ENCODE measurements at regions of chr4 and their contacts with region 1.

Region 1: GRCh38 chr4:152415980-152416379 is 119.9 kb downstream of the FBXW7 start:
- DNase-seq: no peak
- CTCF ChIP-seq: no peak

Region 2: DNA sequence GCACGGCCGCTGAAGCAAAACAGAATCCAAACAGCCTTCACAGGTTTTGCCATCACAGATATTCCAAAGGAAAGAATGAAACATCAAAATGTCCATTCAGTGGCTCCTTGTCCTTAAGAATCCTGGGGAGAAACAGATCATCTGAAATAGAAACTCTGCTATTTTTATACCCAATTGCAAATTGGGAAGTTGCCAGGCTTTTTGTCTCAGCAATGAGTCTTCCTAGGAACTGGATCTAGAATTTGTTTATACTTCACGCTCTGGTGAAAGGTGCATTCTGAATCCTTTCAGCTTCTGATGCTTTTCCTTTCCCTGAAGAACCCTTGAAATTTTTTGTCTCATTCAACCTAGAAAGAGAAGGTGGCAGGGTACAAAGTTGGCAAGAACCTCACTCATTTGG is 99.0 kb before region 1 on chr4:
- CTCF ChIA-PET with region 1: no interaction called
- POLR2A ChIA-PET with region 1: no interaction called
- DNase-seq: no peak
- CTCF ChIP-seq: no peak

Region 3: GRCh38 chr4:152399246-152399645 is 16.7 kb before region 1 on chr4:
- CTCF ChIA-PET with region 1: interaction called, 21 read pairs
- POLR2A ChIA-PET with region 1: no interaction called
- DNase-seq: peak; percentile 19
- CTCF ChIP-seq: no peak

Region 4: DNA sequence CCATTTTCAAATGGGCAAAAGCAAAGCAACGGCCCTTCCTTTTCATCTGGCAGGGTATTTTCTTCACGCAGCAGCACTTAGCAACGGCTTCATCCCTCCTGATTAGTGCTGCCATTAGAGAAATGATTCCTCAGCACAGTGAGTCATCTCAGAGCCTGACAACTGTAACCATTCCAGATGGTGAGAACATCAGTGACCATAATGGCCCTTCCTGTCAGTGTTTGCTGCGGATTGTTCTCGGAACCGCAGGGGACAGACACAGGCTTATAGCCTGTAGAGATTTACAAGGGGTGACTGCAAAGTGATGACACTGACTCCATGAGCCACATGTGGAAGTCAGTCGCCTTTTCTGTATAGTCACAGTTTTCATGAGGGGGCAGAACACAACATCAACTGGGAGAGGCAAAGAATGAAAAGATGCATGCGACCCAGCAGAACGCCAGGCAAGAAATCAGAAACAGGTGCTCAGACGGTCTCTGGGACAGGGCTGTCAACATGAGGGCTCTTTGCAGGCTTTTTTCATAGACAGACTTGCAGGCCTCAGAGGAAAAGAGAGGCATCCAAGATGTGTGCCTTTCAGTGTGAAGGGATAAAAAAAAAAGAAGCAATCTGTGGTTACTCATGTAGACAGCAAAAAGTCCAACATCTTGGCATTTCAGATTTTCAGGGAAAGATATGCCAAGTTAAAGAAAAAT is 189.8 kb after region 1 on chr4:
- CTCF ChIA-PET with region 1: no interaction called
- POLR2A ChIA-PET with region 1: no interaction called
- DNase-seq: no peak
- CTCF ChIP-seq: no peak